K562 (cell line): ENCODE measurements at regions of chr4 and their contacts with region 1.

Region 1: DNA sequence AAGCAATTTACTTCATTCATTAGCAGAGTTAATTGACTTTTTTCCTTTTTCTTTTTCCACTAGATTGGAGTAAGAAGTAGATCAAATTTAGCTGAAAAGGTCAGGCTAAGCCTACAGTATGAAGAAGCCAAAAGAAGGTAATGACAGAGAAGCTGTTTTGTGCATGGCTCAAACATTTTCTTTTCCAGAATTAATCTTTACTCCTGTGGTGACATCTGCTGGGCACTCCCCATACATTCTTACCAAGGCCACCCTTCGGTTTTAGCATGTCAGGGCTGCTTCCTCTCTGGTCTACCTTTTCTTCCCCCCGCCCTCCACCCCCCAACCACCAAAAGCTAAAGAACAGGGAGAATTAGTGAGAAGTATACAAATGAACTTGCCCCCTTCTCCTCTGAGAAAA is 70.2 kb downstream of the CLDN22 start:
- DNase-seq: peak in 2 of 4 experiments; percentile 24 to 40
- ATAC-seq: peak; percentile 82
- H3K4me3 ChIP-seq: no peak overlapping the region
- H3K27ac ChIP-seq: no peak overlapping the region
- H3K4me1 ChIP-seq: no peaks in the 10 kb centered on the region; a peak in 1 of 5 replicates
- H3K27me3 ChIP-seq: no peaks in the 10 kb centered on the region
- CTCF ChIP-seq: peak; percentile 38 to 61 (median 43); a peak in 5 of 6 replicates
- EP300 ChIP-seq: no peak
- POLR2A ChIP-seq: no peak
- RAD21 ChIP-seq: peak; percentile 67

Region 2: DNA sequence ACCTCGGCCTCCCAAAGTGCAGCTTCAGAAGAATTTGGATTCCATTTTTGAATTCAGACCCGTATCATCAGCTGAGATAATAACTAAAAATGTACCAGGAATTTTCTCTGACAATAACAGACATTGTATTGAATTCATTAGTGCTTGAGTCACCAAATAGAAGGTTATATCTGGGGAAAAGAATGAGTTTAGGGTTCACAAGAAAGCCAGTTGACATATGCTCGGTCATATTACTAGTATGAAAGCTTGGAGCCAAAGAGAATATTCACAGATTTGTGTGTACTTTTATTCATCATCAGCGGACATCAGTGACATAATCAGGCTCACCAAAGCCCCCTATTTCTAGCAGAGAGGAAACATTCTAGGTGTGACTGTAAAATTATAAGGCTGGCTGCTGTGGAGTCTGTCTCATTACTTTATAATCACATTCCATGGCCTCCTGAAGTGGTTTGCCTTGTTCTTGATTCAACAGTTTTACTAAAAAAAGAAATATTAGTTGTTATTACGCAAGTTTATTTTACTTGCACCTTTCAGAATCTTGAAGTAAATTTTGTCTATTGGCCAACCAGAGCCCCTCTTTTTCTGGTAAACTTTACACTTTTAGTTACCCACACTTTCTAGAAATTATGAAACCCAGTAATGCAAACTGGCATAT is 318.0 kb before region 1 on chr4:
- CTCF ChIA-PET with region 1: no interaction called
- POLR2A ChIA-PET with region 1: no interaction called
- in situ Hi-C with region 1: loop called (anchors 5 kb)
- intact Hi-C with region 1: no loop called
- DNase-seq: no peak
- ATAC-seq: no peak
- H3K4me3 ChIP-seq: no peak overlapping the region
- H3K27ac ChIP-seq: no peak overlapping the region
- H3K4me1 ChIP-seq: no peaks in the 10 kb centered on the region
- H3K27me3 ChIP-seq: peaks cover 0 to 9% of the 10 kb centered on the region in 2 experiments; a peak in 1 of 5 replicates
- CTCF ChIP-seq: no peak
- EP300 ChIP-seq: no peak
- POLR2A ChIP-seq: no peak
- RAD21 ChIP-seq: no peak